ENCODE measurements at regions of chr3 and their contacts with region 1.

Region 1: DNA sequence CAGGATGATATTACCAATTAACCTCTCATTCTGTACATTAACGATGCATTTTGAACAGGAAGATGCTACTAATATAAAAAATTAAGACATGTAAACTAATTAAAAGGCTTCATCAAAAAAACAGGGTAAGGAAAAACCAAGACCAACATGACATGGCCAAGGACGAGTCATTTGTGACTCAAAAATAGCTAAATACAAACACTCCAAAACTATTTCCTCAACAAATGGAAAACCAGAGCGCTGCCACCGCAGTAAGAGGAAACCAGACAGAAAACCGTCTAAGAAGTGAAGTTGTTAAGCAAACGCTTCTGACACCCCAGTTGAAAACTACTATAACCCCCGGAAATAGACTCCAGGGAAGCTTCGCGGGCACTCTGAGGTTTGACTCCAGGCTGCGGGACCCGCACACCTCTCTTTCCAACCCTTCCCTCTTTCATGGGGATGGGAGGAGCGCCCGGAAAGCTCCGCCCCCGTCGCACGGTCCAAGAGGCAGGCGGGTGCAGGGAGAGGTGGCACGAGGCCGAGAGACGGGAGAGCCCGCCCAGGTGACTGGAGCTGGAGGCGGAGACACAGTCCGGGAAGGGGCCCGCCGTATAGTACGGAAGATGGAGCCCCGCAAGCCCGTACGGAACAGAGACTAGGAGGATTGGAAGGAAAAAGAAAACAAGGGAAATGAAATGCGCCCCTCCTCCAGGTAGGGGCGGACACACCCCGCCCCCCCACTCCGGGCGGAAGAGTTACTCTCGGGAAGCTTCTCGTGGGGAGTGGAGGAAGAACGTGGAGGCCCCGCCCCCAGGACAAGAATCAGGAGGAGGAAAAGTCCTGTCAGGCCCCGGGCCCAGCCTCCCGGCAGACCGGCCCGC is 708 bp downstream of the DCAF1 start:
- DNase-seq: peak; percentile 80 to 92 (median 86)
- ATAC-seq: peak; percentile 90
- H3K4me3 ChIP-seq: peak overlapping the region; percentile 84
- H3K27ac ChIP-seq: peak overlapping the region; percentile 88
- H3K4me1 ChIP-seq: peaks cover 0 to 3% of the 10 kb centered on the region in 2 experiments; a peak in 3 of 5 replicates
- H3K27me3 ChIP-seq: no peaks in the 10 kb centered on the region
- CTCF ChIP-seq: no peak
- EP300 ChIP-seq: no peak
- POLR2A ChIP-seq: peak; percentile 73; the same call in 1 of the 2 replicates
- RAD21 ChIP-seq: no peak

Region 2: DNA sequence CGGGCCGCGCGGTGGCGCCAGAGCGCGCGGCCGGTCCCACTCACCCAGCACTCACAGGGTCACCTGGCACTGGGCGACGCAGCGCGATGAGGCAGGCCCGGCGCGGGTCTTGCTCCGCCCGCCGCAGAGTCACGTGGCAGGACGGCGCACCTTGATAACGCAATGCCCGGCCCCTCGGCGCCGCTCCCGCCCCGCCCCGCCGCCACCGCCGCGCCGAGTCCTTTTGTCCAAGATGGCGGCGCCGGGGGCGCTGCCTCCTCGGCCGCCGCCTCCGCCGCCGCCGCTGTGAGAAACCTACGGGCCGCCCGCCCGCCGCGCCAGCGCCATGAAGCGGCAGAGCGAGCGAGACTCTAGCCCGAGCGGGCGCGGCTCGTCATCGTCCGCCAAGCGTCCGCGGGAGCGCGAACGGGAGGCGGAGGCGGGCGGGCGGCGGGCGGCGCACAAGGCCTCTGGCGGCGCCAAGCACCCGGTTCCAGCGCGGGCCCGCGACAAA is 108.0 kb before region 1 on chr3 and contains the start of gene RBM15B:
- CTCF ChIA-PET with region 1: no interaction called
- POLR2A ChIA-PET with region 1: no interaction called
- in situ Hi-C with region 1: no loop called
- intact Hi-C with region 1: loop called (anchors 1 kb)
- DNase-seq: peak; percentile 79 to 95 (median 88)
- ATAC-seq: peak; percentile 93
- H3K4me3 ChIP-seq: peak within 1 kb of the TSS; percentile 69
- H3K27ac ChIP-seq: peak within 1 kb of the TSS; percentile 79
- H3K4me1 ChIP-seq: peaks cover 29 to 38% of the 10 kb centered on the region in 2 experiments
- H3K27me3 ChIP-seq: no peaks in the 10 kb centered on the region
- CTCF ChIP-seq: peak in 2 of 3 experiments; percentile 75 to 86; a peak in 5 of 6 replicates
- EP300 ChIP-seq: no peak
- POLR2A ChIP-seq: no peak
- RAD21 ChIP-seq: peak; percentile 31 to 58; a peak in 2 of 4 replicates
- polyA plus RNA-seq, gene RBM15B: 1.8 to 1.9 TPM

Region 3: GRCh38 chr3:51637941-51638471 is 138.9 kb after region 1 on chr3:
- CTCF ChIA-PET with region 1: interaction called, 18 read pairs
- POLR2A ChIA-PET with region 1: interaction called, 3 read pairs
- in situ Hi-C with region 1: loop called (anchors 5 kb)
- intact Hi-C with region 1: loop called (anchors 1 kb)
- DNase-seq: peak; percentile 69 to 73 (median 72)
- ATAC-seq: peak; percentile 99
- H3K4me3 ChIP-seq: no peak overlapping the region
- H3K27ac ChIP-seq: no peak overlapping the region
- H3K4me1 ChIP-seq: no peaks in the 10 kb centered on the region
- H3K27me3 ChIP-seq: no peaks in the 10 kb centered on the region
- CTCF ChIP-seq: peak; percentile 90 to 99 (median 99)
- EP300 ChIP-seq: no peak
- POLR2A ChIP-seq: no peak
- RAD21 ChIP-seq: peak; percentile 74 to 86

Region 4: DNA sequence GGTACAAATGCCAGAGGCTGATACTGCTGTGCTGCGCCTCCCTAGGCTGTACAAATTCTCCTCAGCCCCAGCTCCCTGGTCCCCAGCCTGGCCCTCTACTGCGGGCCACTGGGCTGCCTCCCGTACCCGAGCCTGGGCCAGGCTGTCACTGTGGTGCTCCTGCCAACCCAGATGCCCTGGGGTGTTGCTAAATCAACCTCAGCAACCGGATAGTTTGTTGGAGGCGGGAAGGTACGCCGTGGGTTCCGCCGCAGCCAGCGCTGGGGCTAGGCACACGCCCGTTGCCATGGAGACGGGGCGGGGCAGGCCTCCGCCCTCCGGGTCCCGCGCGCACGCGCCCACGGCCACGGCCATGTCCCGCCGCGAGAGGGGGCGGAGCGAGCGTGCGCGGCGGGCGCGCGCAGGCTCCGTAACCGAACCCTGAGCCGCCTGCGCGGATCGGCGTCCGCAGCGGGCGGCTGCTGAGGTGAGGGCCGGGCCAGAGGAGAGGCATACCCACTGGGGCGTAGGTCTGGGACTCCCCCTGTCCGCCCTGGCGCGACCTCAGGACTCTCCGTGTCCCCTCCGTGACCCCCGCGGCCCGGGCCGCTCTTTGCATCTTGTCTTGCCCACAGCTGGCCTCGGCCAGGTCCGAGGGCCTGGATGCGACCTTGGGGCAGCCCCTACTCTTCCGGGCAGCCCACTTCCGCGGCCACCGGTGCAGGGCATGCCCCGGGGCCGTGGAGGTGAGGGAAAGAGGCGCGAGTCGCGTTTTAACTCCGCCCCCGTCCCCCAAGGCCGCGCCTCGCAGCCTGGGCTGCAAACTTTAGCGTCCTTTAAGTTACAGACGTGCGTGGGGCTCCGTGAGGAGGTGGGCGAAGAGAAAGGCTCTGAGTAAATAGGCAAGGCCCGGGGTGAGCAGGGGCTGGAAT is 172.0 kb after region 1 on chr3 and contains the start of gene TEX264:
- CTCF ChIA-PET with region 1: interaction called, 12 read pairs
- POLR2A ChIA-PET with region 1: interaction called, 6 read pairs
- in situ Hi-C with region 1: no loop called
- intact Hi-C with region 1: loop called (anchors 1 kb)
- DNase-seq: peak; percentile 90 to 98 (median 97)
- ATAC-seq: peak; percentile 90
- H3K4me3 ChIP-seq: peak within 1 kb of the TSS; percentile 83
- H3K27ac ChIP-seq: peak within 1 kb of the TSS; percentile 88
- H3K4me1 ChIP-seq: peaks cover 21 to 26% of the 10 kb centered on the region in 2 experiments; a peak in 4 of 5 replicates
- H3K27me3 ChIP-seq: no peaks in the 10 kb centered on the region
- CTCF ChIP-seq: no peak
- EP300 ChIP-seq: no peak
- POLR2A ChIP-seq: peak; percentile 83
- RAD21 ChIP-seq: no peak
- polyA plus RNA-seq, gene TEX264: 4.1 to 20.2 TPM

Region 5: DNA sequence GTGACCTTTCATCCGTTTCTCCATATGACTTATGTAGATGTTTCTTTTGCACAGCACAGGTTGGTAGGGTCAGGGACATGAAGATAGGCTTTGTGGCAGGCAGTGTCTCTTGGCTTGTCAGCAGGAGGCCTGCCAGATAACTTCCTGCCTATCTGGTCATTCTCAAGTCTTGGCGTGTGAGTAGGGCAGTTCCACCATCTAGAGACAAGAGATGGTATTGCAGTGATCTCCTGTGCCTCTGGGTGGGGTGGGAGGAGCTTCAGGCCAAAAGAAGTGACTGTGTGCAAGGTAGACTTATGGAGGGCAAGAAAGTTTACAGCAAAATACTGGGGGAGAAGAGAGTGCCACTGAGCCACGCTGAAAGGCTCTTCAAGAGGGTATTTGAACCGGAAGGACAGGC is 183.0 kb after region 1 on chr3:
- CTCF ChIA-PET with region 1: interaction called, 13 read pairs
- POLR2A ChIA-PET with region 1: interaction called, 6 read pairs
- in situ Hi-C with region 1: loop called (anchors 5 kb)
- intact Hi-C with region 1: loop called (anchors 1 kb)
- DNase-seq: peak; percentile 79 to 87 (median 83)
- ATAC-seq: peak; percentile 99
- H3K4me3 ChIP-seq: no peak overlapping the region
- H3K27ac ChIP-seq: no peak overlapping the region
- H3K4me1 ChIP-seq: peaks cover 22 to 29% of the 10 kb centered on the region in 2 experiments
- H3K27me3 ChIP-seq: no peaks in the 10 kb centered on the region
- CTCF ChIP-seq: peak; percentile 85 to 91 (median 88)
- EP300 ChIP-seq: 0 out of 2 replicates have a peak, but pooled peaks have one; percentile 5
- POLR2A ChIP-seq: no peak
- RAD21 ChIP-seq: peak; percentile 85 to 86

Region 6: DNA sequence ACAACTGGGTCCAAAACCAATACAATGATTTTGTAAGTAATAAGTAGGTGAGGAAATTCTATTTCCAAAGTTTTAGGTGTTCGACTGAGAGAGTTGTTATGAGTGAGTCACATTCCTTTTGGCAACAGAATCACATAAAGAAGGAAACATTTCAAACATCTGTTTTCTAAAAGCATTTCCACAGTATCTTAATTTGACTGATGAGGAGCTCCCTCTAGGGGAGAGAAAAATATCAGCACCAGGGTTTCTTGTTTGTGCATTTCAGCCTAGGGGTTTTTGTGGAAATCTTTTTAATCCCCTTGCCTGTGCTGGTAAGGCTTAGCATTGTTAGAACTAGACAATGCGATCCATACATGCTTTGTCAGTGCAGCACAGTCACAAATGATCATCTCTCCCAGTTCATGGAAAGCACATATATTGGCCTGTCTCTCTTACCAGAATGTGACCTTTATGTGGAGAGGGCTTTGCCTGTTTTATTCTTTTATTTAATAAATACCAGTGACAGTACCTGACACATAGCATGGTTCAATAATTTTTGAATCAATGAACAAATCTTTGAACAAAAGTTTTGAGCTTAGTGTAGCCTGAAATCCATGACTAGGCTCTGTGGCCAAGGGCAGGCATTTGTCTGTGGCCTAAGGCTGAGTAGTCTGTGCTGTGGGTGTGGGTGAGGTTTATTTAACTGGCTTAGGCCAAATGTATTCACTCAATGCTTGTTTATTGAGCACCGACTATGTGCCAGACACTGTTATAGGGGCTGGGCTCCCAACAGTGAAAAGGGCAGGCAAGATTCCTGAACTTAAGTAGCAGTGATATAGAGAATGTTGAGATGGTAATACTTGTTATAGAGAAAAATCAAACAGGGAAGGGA is 301.0 kb after region 1 on chr3:
- CTCF ChIA-PET with region 1: no interaction called
- POLR2A ChIA-PET with region 1: no interaction called
- in situ Hi-C with region 1: no loop called
- intact Hi-C with region 1: loop called (anchors 5 kb)
- DNase-seq: peak; percentile 20 to 50 (median 32)
- ATAC-seq: peak; percentile 65
- H3K4me3 ChIP-seq: no peak overlapping the region
- H3K27ac ChIP-seq: no peak overlapping the region
- H3K4me1 ChIP-seq: no peaks in the 10 kb centered on the region; a peak in 1 of 5 replicates
- H3K27me3 ChIP-seq: peaks cover 0 to 7% of the 10 kb centered on the region in 2 experiments; a peak in 1 of 5 replicates
- CTCF ChIP-seq: peak; percentile 50 to 71 (median 63); a peak in 5 of 6 replicates
- EP300 ChIP-seq: no peak
- POLR2A ChIP-seq: no peak
- RAD21 ChIP-seq: peak; percentile 48 to 71

Measured in K562 (cell line).